ENCODE measurements at regions of chr16 and their contacts with region 1.

Region 1: GRCh38 chr16:48542020-48542473 is 67.9 kb downstream of the N4BP1 start:
- DNase-seq: peak; percentile 46 to 72 (median 62)
- ATAC-seq: peak; percentile 56 to 77 (median 65)
- H3K4me3 ChIP-seq: no peak overlapping the region
- H3K27ac ChIP-seq: peak overlapping the region in 2 of 12 donors; percentile 19 to 47
- H3K4me1 ChIP-seq: peaks cover 2 to 54% (median 28%) of the 10 kb centered on the region in 12 donors
- H3K27me3 ChIP-seq: no peaks in the 10 kb centered on the region
- CTCF ChIP-seq: peak; percentile 34 to 70 (median 58)
- POLR2A ChIP-seq: no peak

Region 2: GRCh38 chr16:48244080-48244862 is 297.8 kb before region 1 on chr16 and contains the start of gene LONP2:
- intact Hi-C with region 1: loop called in 4 of 10 experiments (anchors 10 kb)
- DNase-seq: peak; percentile 91 to 95 (median 93)
- ATAC-seq: peak; percentile 97 to 100 (median 100)
- H3K4me3 ChIP-seq: peak within 1 kb of the TSS; percentile 70 to 99 (median 90)
- H3K27ac ChIP-seq: peak within 1 kb of the TSS; percentile 54 to 90 (median 88)
- H3K4me1 ChIP-seq: peaks cover 11 to 42% (median 31%) of the 10 kb centered on the region in 12 donors
- H3K27me3 ChIP-seq: no peaks in the 10 kb centered on the region
- CTCF ChIP-seq: no peak
- POLR2A ChIP-seq: peak in 1 of 2 donors; percentile 74
- total RNA-seq, gene LONP2: 42.8 to 87.4 (median 69.3) TPM

Region 3: DNA sequence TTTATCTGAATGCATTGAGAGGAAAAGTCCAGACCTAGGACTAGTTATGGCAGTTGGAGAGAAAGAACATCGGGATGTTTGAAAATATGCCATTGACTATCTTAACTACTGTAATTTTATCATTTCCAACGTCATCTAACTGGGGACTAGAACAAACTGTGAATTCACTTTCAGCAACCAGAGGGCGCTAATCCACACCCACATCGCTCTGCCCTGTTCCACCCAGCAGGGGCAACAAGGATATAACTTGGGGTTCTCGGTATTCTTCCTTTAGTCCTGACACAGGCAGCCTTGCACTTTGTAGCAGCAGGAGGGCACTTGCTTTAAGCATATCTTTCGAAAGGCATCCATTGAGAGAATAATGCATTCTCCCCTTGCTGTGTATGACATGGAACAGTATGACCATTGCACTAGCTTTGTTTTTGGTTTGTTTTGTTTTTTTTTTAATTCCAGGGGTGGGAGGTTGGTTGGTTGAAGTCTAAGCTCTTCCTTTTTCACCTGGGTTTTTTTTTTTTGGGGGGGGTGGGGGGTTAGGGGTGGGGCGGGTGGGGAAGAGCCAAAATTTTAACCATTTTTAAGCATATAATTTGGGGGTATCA is 188.4 kb before region 1 on chr16:
- intact Hi-C with region 1: loop called in 9 of 10 experiments (anchors 2 to 10 kb)
- DNase-seq: peak in 3 of 5 donors; percentile 49 to 62 (median 53)
- ATAC-seq: peak; percentile 66 to 86 (median 83)
- H3K4me3 ChIP-seq: no peak overlapping the region
- H3K27ac ChIP-seq: peak overlapping the region in 2 of 12 donors; percentile 34 to 42
- H3K4me1 ChIP-seq: peaks cover 0 to 26% (median 8%) of the 10 kb centered on the region in 12 donors
- H3K27me3 ChIP-seq: no peaks in the 10 kb centered on the region
- CTCF ChIP-seq: peak; percentile 78 to 91 (median 83)
- POLR2A ChIP-seq: no peak

Region 4: GRCh38 chr16:48385272-48386150 is 156.5 kb before region 1 on chr16 and contains the start of gene SIAH1:
- intact Hi-C with region 1: loop called in 4 of 10 experiments (anchors 10 kb)
- DNase-seq: peak; percentile 86 to 93 (median 89)
- ATAC-seq: peak; percentile 79 to 95 (median 93)
- H3K4me3 ChIP-seq: peak within 1 kb of the TSS; percentile 85 to 99 (median 95)
- H3K27ac ChIP-seq: peak within 1 kb of the TSS; percentile 97 to 100 (median 99)
- H3K4me1 ChIP-seq: peaks cover 6 to 50% (median 24%) of the 10 kb centered on the region in 12 donors
- H3K27me3 ChIP-seq: no peaks in the 10 kb centered on the region
- CTCF ChIP-seq: no peak
- POLR2A ChIP-seq: peak; percentile 55 to 87
- total RNA-seq, gene SIAH1: 10.9 to 21.5 (median 15.5) TPM

Measured in heart left ventricle (tissue), 16 donors.